Ascending aorta (tissue), 2 donors: ENCODE measurements at regions of chr19 and their contacts with region 1.

Region 1: DNA sequence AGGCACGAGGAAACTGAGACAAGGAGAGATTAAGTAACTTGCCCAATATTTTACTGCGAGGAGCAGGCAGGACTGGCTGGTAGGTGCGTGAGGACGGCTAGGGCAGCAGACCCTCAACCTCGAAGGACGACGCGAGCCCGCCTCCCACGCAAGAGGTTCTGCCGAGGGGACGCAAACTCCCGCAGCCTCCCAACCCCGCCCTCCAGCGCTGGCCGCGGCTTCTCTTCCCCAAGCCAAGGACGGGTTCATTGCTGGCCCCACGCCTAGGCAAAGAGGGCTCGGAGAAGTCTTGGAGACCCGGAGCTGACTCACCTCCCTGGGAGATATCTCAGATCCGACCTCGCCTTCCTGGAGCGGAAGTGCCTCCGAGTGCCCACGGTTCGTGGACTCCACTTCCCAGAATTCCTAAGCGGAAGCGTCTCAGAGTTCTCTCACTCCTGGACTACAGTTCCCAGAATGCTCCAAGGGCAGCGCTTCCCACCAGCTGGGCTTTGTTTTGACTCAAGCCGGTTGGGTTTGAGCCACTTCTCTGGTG is at the start of gene ZNF235:
- DNase-seq: peak; percentile 74 to 96
- H3K4me3 ChIP-seq: peak within 1 kb of the TSS; percentile 81 to 83
- H3K27ac ChIP-seq: peak within 1 kb of the TSS; percentile 76 to 83
- H3K4me1 ChIP-seq: no peaks in the 10 kb centered on the region
- H3K27me3 ChIP-seq: no peaks in the 10 kb centered on the region
- CTCF ChIP-seq: no peak
- total RNA-seq, gene ZNF235: 6.6 TPM

Region 2: GRCh38 chr19:43983912-43984686 is 320.6 kb before region 1 on chr19 and contains the start of gene ZNF155:
- intact Hi-C with region 1: loop called (anchors 10 kb)
- DNase-seq: peak; percentile 77 to 95
- H3K4me3 ChIP-seq: peak within 1 kb of the TSS; percentile 74
- H3K27ac ChIP-seq: peak within 1 kb of the TSS; percentile 72 to 81
- H3K4me1 ChIP-seq: peaks cover 0 to 4% of the 10 kb centered on the region in 2 donors
- H3K27me3 ChIP-seq: no peaks in the 10 kb centered on the region
- CTCF ChIP-seq: no peak
- total RNA-seq, gene ZNF155: not detected

Region 3: GRCh38 chr19:44141191-44142058 is 163.3 kb before region 1 on chr19 and contains the start of gene ZNF234:
- intact Hi-C with region 1: loop called (anchors 1 kb)
- DNase-seq: peak; percentile 35 to 88
- H3K4me3 ChIP-seq: peak within 1 kb of the TSS; percentile 69 to 96
- H3K27ac ChIP-seq: peak within 1 kb of the TSS; percentile 59 to 80
- H3K4me1 ChIP-seq: peaks cover 0 to 10% of the 10 kb centered on the region in 2 donors
- H3K27me3 ChIP-seq: no peaks in the 10 kb centered on the region
- CTCF ChIP-seq: no peak
- total RNA-seq, gene ZNF234: 7.9 TPM

Region 4: DNA sequence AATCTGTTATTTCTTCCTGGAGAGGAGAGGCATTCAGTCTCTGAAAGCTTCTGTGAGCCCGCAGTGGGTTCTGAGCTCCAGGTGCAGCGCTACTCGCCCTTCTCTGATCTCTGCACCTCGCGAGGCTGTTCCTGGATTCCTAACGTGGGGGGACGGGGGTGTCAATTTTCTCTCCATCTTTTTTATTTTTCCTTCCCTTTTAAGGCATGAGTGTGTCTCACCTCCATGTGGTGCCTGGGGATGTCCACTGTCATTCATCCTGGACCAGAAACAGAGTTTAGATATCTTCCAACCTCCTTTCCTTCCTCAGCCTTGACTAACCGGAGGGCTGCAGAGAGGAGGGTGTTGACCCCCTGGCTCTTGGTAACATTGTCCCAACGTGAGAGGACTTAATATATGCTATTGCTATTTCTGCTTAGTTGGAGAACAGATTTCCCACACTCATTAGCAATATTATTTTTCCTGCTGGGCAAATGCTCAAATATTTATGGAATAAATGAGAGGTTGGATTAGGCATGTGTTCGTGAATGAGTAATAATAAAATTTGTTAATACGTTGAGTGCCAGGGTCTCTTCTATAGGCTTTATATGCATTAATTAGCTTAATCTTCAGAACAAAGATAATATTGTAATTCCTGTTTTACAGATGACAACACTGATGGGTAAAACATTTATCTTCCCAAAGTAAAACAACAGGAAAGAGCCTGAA is 44.2 kb before region 1 on chr19:
- intact Hi-C with region 1: no loop called
- DNase-seq: no peak
- H3K4me3 ChIP-seq: no peak overlapping the region
- H3K27ac ChIP-seq: no peak overlapping the region
- H3K4me1 ChIP-seq: no peaks in the 10 kb centered on the region
- H3K27me3 ChIP-seq: no peaks in the 10 kb centered on the region
- CTCF ChIP-seq: no peak

Region 5: GRCh38 chr19:44356383-44357111 is 51.8 kb after region 1 on chr19 and contains the start of gene ZNF112:
- intact Hi-C with region 1: loop called (anchors 1 kb)
- DNase-seq: peak; percentile 41 to 90
- H3K4me3 ChIP-seq: peak within 1 kb of the TSS; percentile 69 to 73
- H3K27ac ChIP-seq: peak within 1 kb of the TSS; percentile 33 to 56
- H3K4me1 ChIP-seq: peaks cover 0 to 5% of the 10 kb centered on the region in 2 donors
- H3K27me3 ChIP-seq: no peaks in the 10 kb centered on the region
- CTCF ChIP-seq: no peak
- total RNA-seq, gene ZNF112: 0.11 TPM